Common myeloid progenitor, CD34-positive (primary cell): ENCODE measurements at regions of chr1 and their contacts with region 1.

Region 1: GRCh38 chr1:224116131-224116530 is 2.2 kb downstream of the FBXO28 start:
- DNase-seq: peak; percentile 65 to 75 (median 74)
- H3K4me3 ChIP-seq: no peak overlapping the region
- H3K27ac ChIP-seq: peak overlapping the region in 1 of 2 experiments; percentile 26
- H3K4me1 ChIP-seq: peaks cover 7 to 25% (median 18%) of the 10 kb centered on the region in 4 experiments
- H3K27me3 ChIP-seq: no peaks in the 10 kb centered on the region

Region 2: DNA sequence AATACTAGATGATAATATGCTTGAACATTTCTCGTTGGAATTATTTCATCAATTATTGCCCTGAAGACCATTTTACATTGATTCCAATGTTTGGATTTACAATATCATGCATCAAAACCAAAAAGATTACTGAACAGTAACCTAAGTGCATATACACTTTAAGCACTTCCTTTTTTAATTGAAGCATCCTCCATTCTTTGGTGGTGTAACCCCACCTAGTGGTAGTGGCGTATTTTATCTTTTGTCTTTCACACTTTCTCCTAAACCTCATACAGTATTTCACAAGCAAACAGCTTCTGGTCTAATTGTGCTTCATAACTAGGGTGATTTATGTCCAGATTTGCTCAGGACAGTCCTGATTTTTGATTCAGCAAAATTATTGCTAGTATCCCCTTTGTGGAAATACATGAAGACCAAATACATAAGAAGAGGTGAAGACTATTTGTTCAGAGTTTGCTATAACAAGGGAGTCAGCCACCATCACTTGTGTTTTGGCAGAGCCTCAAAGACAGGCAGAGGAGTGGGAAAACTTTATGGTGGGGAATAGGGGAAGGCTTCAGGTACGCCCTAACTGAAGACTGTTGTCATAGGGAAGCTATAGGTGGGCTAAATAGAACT is 217.3 kb after region 1 on chr1:
- CTCF ChIA-PET with region 1: interaction called, 12 read pairs
- POLR2A ChIA-PET with region 1: interaction called, 3 read pairs
- DNase-seq: peak; percentile 70 to 90 (median 89)
- H3K4me3 ChIP-seq: peak overlapping the region in 2 of 7 experiments; percentile 45 to 59
- H3K27ac ChIP-seq: peak overlapping the region; percentile 53 to 85
- H3K4me1 ChIP-seq: peaks cover 11 to 36% (median 26%) of the 10 kb centered on the region in 4 experiments
- H3K27me3 ChIP-seq: no peaks in the 10 kb centered on the region